ENCODE measurements at regions of chr1 and their contacts with region 1.

Region 1: DNA sequence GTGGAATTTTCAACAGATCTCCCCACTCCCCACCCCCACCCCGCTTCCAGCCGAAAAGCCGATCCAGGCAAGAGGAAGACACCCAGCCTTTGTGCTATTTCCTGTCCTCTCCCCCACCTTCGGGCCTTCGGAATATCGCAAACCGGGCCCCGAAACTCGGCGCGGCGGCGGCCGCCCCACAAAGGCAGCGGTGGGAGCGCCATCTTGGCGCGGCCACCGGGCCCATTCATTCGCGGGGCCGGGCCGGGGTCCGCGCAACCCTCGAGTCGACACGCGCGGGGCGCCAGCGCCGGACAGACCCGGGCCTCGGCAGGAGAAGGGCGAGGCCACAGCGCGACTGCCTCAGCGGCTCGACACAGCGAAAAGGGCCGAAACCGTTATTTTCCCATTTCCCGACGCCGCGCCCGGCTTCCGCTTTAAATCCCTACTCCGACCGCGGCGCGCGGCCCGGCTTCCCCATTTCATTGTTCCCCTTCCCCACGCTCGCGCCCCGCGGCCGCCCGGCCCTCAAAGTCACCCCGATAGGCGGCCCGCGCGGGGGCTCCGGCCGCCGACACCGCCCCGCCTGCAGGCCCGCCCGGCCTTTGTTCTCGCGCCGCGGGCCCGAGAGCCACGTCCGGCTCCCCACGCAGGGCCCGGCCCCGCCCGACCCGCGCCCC is 911 bp downstream of the GNB1 start:
- DNase-seq: peak; percentile 45

Region 2: GRCh38 chr1:1826356-1827088 is 63.5 kb before region 1 on chr1:
- in situ Hi-C with region 1: loop called (anchors 10 kb)
- DNase-seq: peak; percentile 62